ENCODE measurements at regions of chr19 and their contacts with region 1.

Region 1: GRCh38 chr19:47296036-47296435 is 13.6 kb upstream of the C5AR1 start:
- DNase-seq: peak; percentile 89
- ATAC-seq: peak; percentile 97
- H3K4me3 Mint-ChIP-seq: no peak overlapping the region
- H3K27ac Mint-ChIP-seq: no peak overlapping the region
- H3K4me1 Mint-ChIP-seq: peaks cover 4% of the 10 kb centered on the region
- H3K27me3 Mint-ChIP-seq: no peaks in the 10 kb centered on the region
- CTCF ChIP-seq: peak; percentile 78

Region 2: GRCh38 chr19:47391510-47392223 is 95.6 kb after region 1 on chr19:
- CTCF ChIA-PET with region 1: interaction called, 32 read pairs
- POLR2A ChIA-PET with region 1: no interaction called
- intact Hi-C with region 1: loop called (anchors 5 kb)
- DNase-seq: peak; percentile 88
- ATAC-seq: peak; percentile 93
- H3K4me3 Mint-ChIP-seq: no peak overlapping the region
- H3K27ac Mint-ChIP-seq: no peak overlapping the region
- H3K4me1 Mint-ChIP-seq: peaks cover 4% of the 10 kb centered on the region
- H3K27me3 Mint-ChIP-seq: peaks cover 7% of the 10 kb centered on the region
- CTCF ChIP-seq: peak; percentile 94